ENCODE measurements at regions of chr2 and their contacts with region 1.

Region 1: GRCh38 chr2:20661067-20661980 is 5.6 kb upstream of the GDF7 start:
- DNase-seq: peak; percentile 69
- ATAC-seq: peak; percentile 89

Region 2: GRCh38 chr2:20962939-20963557 is 301.7 kb after region 1 on chr2:
- intact Hi-C with region 1: loop called (anchors 2 kb)
- DNase-seq: peak; percentile 74
- ATAC-seq: peak; percentile 78

Region 3: GRCh38 chr2:21118302-21118920 is 457.1 kb after region 1 on chr2:
- intact Hi-C with region 1: loop called (anchors 5 kb)
- DNase-seq: no peak
- ATAC-seq: peak; percentile 73

Measured in Right ventricle myocardium superior (tissue), 1 donor.